ENCODE measurements at regions of chr13 and their contacts with region 1.

Region 1: GRCh38 chr13:29707876-29708543 is 112.5 kb upstream of the SLC7A1 start:
- DNase-seq: peak; percentile 53
- CTCF ChIP-seq: peak; percentile 84

Region 2: GRCh38 chr13:29508130-29508875 is 199.7 kb before region 1 on chr13:
- in situ Hi-C with region 1: loop called (anchors 10 kb)
- DNase-seq: peak; percentile 92
- CTCF ChIP-seq: peak; percentile 98

Measured in GM13977 (cell line).